ENCODE measurements at regions of chr20 and their contacts with region 1.

Region 1: DNA sequence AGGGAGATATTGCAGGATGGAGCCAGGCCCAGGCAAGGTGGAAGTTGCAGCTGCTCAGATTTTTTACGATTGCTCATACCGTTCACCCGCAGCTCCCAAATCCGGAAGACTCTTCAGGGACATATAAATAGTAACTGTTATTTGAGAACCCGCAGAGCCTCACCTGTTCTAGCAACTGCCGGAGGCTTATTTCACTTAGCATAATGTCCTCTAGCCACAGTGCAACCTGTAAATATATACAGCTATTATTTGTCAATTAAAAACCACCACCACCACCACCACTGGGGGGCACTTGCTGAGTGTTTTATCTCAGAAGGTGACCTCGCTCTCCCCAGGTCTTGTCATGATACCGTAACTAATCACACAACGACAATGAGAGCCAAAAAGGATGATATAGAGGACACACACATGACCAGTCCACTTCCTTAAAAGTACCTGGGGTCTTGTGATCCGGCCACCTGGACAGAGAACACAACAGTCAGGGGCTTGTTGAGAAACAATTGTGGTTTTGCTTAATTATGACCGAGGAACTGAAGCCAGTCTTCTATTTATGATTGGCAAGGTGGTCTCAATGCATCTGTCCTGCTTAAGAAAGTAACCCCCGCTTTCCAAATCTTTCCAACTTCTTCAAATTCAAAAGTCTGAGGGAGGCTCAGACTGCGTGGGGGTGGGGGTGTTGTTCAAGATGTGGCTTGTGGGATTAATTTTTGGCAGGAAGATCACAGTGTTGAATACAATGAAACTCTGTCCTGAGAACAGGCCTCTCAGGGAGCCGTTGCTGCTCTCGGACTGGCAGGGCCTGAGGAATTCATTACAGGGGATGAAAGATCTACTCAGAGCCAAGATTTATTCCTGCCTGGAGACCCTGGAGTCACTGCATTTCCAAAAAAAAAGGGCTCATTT is 107.7 kb upstream of the PRND start:
- DNase-seq: peak; percentile 37 to 76 (median 69)
- ATAC-seq: peak; percentile 79
- H3K4me3 ChIP-seq: no peak overlapping the region
- H3K4me3 Mint-ChIP-seq: no peak overlapping the region
- H3K27ac ChIP-seq: no peak overlapping the region
- H3K27ac Mint-ChIP-seq: no peak overlapping the region
- H3K4me1 ChIP-seq: no peaks in the 10 kb centered on the region
- H3K4me1 Mint-ChIP-seq: peaks cover 2% of the 10 kb centered on the region
- H3K27me3 ChIP-seq: no peaks in the 10 kb centered on the region
- H3K27me3 Mint-ChIP-seq: peaks cover 2% of the 10 kb centered on the region
- CTCF ChIP-seq: peak; percentile 58

Region 2: DNA sequence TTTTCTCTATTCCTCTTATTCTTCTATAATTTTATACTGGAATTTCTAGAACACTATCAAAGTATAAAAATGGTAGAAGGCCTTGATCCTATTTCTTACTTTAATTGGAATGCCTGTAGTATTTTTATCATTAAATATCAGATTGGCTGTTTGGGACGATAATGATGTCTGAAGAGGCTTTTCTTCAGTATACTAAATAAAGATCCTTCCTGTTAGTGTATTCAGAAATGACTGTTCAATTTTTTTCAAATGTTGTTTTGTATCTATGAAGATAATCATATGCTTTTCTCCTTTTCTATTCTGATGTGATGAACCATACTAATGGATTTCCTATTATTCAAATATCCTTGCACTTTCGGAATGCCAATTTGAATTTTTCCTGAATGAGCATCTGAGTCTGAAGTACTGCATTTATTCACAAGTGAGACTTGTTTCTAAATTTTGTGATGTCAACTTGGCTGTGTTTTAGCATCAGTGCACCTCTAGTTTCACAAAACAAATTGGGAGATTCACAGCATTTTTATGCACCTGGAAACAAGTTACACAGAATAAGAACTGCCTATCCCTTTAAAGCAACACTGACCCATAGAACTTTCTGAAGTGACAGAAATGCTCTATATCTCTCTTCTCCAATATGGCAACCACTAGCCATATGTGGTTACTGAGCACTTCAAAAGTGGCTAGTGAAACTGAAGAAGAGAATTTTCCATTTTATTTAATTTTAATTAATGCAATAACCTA is 36.1 kb after region 1 on chr20:
- CTCF ChIA-PET with region 1: no interaction called
- POLR2A ChIA-PET with region 1: no interaction called
- intact Hi-C with region 1: no loop called
- DNase-seq: no peak
- ATAC-seq: no peak
- H3K4me3 ChIP-seq: no peak overlapping the region
- H3K4me3 Mint-ChIP-seq: no peak overlapping the region
- H3K27ac ChIP-seq: no peak overlapping the region
- H3K27ac Mint-ChIP-seq: no peak overlapping the region
- H3K4me1 ChIP-seq: no peaks in the 10 kb centered on the region
- H3K4me1 Mint-ChIP-seq: no peaks in the 10 kb centered on the region
- H3K27me3 ChIP-seq: peaks cover 0 to under 1% of the 10 kb centered on the region in 2 experiments
- H3K27me3 Mint-ChIP-seq: no peaks in the 10 kb centered on the region
- CTCF ChIP-seq: no peak

Region 3: GRCh38 chr20:4666001-4666479 is 52.1 kb after region 1 on chr20:
- CTCF ChIA-PET with region 1: interaction called, 3 read pairs
- POLR2A ChIA-PET with region 1: no interaction called
- intact Hi-C with region 1: loop called in 1 of 2 experiments (anchors 10 kb)
- DNase-seq: peak in 8 of 9 experiments; percentile 40 to 74 (median 60)
- ATAC-seq: peak; percentile 83
- H3K4me3 ChIP-seq: peak overlapping the region in 1 of 2 experiments; percentile 26
- H3K4me3 Mint-ChIP-seq: peak overlapping the region; percentile 56
- H3K27ac ChIP-seq: peak overlapping the region; percentile 24 to 69
- H3K27ac Mint-ChIP-seq: peak overlapping the region; percentile 46
- H3K4me1 ChIP-seq: peaks cover 9% of the 10 kb centered on the region
- H3K4me1 Mint-ChIP-seq: peaks cover 19% of the 10 kb centered on the region
- H3K27me3 ChIP-seq: no peaks in the 10 kb centered on the region
- H3K27me3 Mint-ChIP-seq: peaks cover 2% of the 10 kb centered on the region
- CTCF ChIP-seq: no peak